ENCODE measurements at regions of chr16 and their contacts with region 1.

Region 1: GRCh38 chr16:49663081-49664065 is 192.5 kb downstream of the ZNF423 start:
- DNase-seq: no peak
- H3K4me3 ChIP-seq: peak overlapping the region; percentile 40 to 48 (median 42)
- H3K27ac ChIP-seq: peak overlapping the region; percentile 79 to 88 (median 84)
- H3K4me1 ChIP-seq: peaks cover 21 to 63% (median 49%) of the 10 kb centered on the region in 4 donors
- H3K27me3 ChIP-seq: no peaks in the 10 kb centered on the region
- CTCF ChIP-seq: no peak
- EP300 ChIP-seq: no peak
- POLR2A ChIP-seq: no peak

Region 2: DNA sequence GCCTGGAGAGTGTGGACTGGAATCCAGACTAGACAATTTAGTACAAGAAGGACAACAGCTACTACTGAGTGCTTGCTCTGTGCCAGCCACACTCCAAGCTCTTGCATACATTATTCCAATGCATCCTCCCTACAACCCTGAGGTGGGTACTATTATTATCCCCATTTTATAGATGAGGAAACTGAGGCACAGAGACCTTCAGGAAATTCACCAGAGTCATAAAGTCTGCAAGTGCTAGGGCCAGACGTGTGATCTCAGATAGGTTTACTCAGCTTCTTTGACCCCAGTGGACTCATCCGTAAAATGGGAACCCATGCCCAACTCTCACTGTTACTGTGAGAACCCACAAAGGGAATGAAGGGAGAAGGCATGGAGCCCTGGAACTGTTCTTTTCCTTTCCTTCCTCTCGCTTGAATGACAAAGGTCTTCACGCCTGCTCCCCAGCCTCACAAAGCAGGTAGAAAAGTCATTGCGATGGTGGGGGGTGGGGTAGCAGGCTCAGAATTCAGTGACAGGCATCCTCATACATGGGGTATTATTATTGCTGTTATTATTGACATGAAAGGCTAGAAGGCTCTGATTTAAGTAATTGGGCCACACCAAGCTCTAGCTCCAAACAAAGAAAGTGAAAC is 32.5 kb after region 1 on chr16:
- intact Hi-C with region 1: loop called (anchors 2 kb)
- DNase-seq: no peak
- H3K4me3 ChIP-seq: no peak overlapping the region
- H3K27ac ChIP-seq: no peak overlapping the region
- H3K4me1 ChIP-seq: peaks cover 25 to 27% (median 27%) of the 10 kb centered on the region in 4 donors
- H3K27me3 ChIP-seq: no peaks in the 10 kb centered on the region
- CTCF ChIP-seq: no peak
- EP300 ChIP-seq: no peak
- POLR2A ChIP-seq: no peak

Measured in esophagus muscularis mucosa (tissue), 4 donors.